GM12878 (cell line): ENCODE measurements at regions of chr7 and their contacts with region 1.

Region 1: DNA sequence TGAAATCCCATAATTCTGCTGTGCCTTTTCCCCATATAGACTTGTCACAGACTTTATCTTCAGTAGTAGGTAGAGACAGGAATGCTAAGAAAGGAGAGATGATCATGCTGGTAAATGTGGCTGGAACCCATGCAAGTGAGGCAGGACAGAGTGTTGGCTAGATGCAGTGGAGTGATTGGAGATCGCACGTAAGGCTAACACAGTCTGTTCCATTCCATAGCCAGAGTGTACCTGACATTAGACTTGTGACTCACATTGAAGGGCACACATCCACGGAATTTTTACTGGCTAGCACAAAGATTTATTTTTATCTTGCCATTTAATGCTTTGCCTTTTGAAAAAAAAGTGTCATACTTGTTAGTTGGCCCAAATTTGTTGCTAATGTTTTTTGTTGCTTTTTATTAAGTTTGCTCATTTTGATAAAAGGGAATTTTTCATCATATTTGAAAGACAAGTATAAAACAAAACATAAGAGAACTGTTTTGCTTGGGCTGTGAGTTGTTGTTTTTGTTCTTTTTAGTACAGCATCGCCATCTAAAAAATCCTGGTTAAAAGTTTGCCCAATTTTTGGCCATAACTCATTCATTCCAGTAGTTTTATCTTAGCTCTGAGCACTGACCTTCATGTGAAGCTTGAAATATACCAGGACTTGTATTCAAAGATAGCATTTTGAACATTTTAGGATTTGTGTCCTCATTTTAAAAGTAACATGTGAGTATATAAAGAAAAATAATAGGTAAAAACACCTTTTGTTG is 81.0 kb downstream of the CPED1 start:
- DNase-seq: no peak
- ATAC-seq: no peak
- H3K4me3 ChIP-seq: no peak overlapping the region
- H3K27ac ChIP-seq: no peak overlapping the region
- H3K4me1 ChIP-seq: no peaks in the 10 kb centered on the region
- H3K27me3 ChIP-seq: no peaks in the 10 kb centered on the region
- CTCF ChIP-seq: no peak
- EP300 ChIP-seq: no peak
- POLR2A ChIP-seq: no peak
- RAD21 ChIP-seq: no peak

Region 2: GRCh38 chr7:120996333-120996987 is 73.1 kb before region 1 on chr7:
- CTCF ChIA-PET with region 1: no interaction called
- POLR2A ChIA-PET with region 1: no interaction called
- RAD21 ChIA-PET with region 1: no interaction called
- SMC1A ChIA-PET with region 1: no interaction called
- in situ Hi-C with region 1: loop called (anchors 5 kb)
- intact Hi-C with region 1: no loop called
- DNase-seq: no peak
- ATAC-seq: peak; percentile 45; the same call in 2 of the 3 replicates
- H3K4me3 ChIP-seq: no peak overlapping the region
- H3K27ac ChIP-seq: no peak overlapping the region
- H3K4me1 ChIP-seq: peaks cover under 1% of the 10 kb centered on the region; the same call in 1 of the 2 replicates
- H3K27me3 ChIP-seq: peaks cover 0 to 4% of the 10 kb centered on the region in 2 experiments; a peak in 1 of 4 replicates
- CTCF ChIP-seq: no peak
- EP300 ChIP-seq: no peak
- POLR2A ChIP-seq: no peak
- RAD21 ChIP-seq: no peak

Region 3: DNA sequence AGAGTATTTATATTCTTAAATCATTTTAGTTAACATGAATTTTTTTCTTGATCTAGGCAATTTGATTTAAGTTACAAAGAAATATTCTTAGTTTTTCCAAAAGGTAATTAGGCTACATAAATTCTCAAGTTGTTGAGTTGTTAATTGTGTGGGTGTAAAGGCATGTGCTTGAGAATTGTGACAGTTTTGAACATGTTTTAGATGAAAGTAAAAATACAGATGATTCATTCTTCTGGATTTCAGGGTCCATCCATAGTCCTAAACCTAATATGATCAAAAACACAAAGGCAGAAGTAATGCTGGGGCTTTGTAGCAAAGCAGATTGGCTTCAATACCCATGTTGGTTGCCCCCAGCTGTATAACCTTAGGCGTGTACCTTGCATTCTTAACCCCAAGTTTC is 46.9 kb after region 1 on chr7:
- CTCF ChIA-PET with region 1: no interaction called
- POLR2A ChIA-PET with region 1: no interaction called
- RAD21 ChIA-PET with region 1: no interaction called
- SMC1A ChIA-PET with region 1: no interaction called
- in situ Hi-C with region 1: no loop called
- intact Hi-C with region 1: no loop called
- DNase-seq: no peak
- ATAC-seq: no peak
- H3K4me3 ChIP-seq: no peak overlapping the region
- H3K27ac ChIP-seq: no peak overlapping the region
- H3K4me1 ChIP-seq: no peaks in the 10 kb centered on the region
- H3K27me3 ChIP-seq: no peaks in the 10 kb centered on the region; a peak in 1 of 4 replicates
- CTCF ChIP-seq: no peak
- EP300 ChIP-seq: no peak
- POLR2A ChIP-seq: no peak
- RAD21 ChIP-seq: no peak